ENCODE measurements at regions of chr14 and their contacts with region 1.

Region 1: GRCh38 chr14:91893007-91893406 is 25.7 kb upstream of the TC2N start:
- DNase-seq: no peak
- ATAC-seq: no peak
- H3K4me3 ChIP-seq: no peak overlapping the region
- H3K27ac ChIP-seq: peak overlapping the region; percentile 91 to 97
- H3K4me1 ChIP-seq: peaks cover 4 to 10% of the 10 kb centered on the region in 2 donors
- H3K27me3 ChIP-seq: no peaks in the 10 kb centered on the region

Region 2: DNA sequence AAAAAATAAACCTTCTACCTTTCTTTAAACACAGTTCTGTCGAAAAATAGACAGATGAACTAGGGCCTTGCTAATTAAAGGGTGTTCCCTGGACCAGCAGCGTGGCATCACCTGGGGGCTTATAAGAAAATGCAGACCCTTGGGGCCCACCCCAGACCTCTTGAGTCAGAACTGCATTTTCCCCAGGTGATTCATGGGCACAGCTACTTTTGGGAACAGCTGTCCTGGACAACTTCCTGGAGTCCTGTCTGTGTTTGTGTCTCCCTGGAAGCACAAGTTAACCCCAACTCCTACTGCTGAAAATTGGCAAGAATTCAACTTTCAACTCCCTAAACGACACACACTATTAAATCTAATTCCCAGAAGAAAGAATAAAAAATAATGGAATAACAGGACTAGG is 36.7 kb after region 1 on chr14:
- intact Hi-C with region 1: loop called in 1 of 2 experiments (anchors 5 kb)
- DNase-seq: peak in 1 of 2 donors; percentile 64
- ATAC-seq: no peak
- H3K4me3 ChIP-seq: no peak overlapping the region
- H3K27ac ChIP-seq: no peak overlapping the region
- H3K4me1 ChIP-seq: peaks cover 7 to 18% of the 10 kb centered on the region in 2 donors
- H3K27me3 ChIP-seq: no peaks in the 10 kb centered on the region

Region 3: DNA sequence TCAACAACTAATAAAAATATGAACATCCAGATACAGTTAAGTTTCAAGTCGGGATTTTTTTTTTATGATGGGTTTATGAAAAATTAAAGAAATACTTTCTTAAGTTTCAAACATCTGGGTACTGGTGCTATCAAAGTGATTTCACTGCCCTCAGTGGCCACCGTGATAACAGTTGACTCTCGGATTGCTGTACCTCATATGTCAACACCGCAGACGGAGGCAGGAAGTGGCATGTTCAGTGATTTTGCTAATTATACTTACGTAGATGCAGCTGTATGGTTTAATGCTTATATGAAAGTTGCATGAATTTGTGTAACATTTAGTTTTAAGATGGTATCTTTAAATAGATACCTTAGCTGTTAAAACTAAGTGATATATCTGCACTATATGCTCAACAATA is 75.3 kb after region 1 on chr14:
- intact Hi-C with region 1: no loop called
- DNase-seq: no peak
- ATAC-seq: no peak
- H3K4me3 ChIP-seq: no peak overlapping the region
- H3K27ac ChIP-seq: no peak overlapping the region
- H3K4me1 ChIP-seq: no peaks in the 10 kb centered on the region
- H3K27me3 ChIP-seq: no peaks in the 10 kb centered on the region

Measured in aorta (tissue), 5 donors.